ENCODE measurements at regions of chr15 and their contacts with region 1.

Region 1: DNA sequence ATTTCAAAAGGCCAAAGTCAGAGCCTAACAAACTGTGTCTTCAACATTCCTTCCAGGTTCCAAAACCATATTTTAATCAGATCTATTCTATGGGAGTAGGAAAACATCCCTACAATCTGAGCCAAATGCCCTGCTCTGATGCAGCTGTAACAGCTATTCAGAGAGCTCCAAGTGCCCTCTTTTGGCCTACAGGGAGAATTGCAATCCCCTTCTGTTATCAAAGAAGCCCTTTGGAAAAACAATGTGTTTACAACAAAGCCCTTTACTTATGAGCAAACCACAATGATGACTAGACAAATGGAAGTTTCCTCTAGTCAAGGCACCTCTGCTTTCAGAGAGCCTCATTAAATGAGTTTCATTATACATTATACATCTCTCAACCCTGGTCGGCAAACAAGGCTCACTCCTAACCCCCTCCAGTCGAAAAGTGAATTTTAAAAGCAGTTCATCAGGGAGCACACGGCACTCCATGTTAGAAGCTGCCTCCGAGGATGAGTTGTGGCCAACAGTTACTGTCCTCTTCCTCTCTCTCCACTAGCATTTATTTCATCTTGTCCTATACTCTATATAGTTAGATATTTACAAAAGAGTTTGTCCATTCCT is 42.6 kb upstream of the TMCO5A start:
- DNase-seq: peak; percentile 70
- ATAC-seq: peak; percentile 99
- H3K4me3 ChIP-seq: no peak overlapping the region
- H3K27ac ChIP-seq: no peak overlapping the region
- H3K4me1 ChIP-seq: peaks cover 2% of the 10 kb centered on the region; the same call in 1 of the 2 replicates
- H3K27me3 ChIP-seq: no peaks in the 10 kb centered on the region
- CTCF ChIP-seq: peak; percentile 88
- POLR2A ChIP-seq: no peak
- RAD21 ChIP-seq: peak; percentile 88

Region 2: GRCh38 chr15:36230741-36231140 is 1661.1 kb before region 1 on chr15:
- CTCF ChIA-PET with region 1: no interaction called
- POLR2A ChIA-PET with region 1: no interaction called
- dilution Hi-C with region 1: no loop called
- in situ Hi-C with region 1: loop called (anchors 25 kb)
- intact Hi-C with region 1: no loop called
- DNase-seq: peak; percentile 84
- ATAC-seq: peak; percentile 89
- H3K4me3 ChIP-seq: no peak overlapping the region
- H3K27ac ChIP-seq: no peak overlapping the region
- H3K4me1 ChIP-seq: peaks cover 3% of the 10 kb centered on the region
- H3K27me3 ChIP-seq: no peaks in the 10 kb centered on the region
- CTCF ChIP-seq: no peak
- POLR2A ChIP-seq: no peak
- RAD21 ChIP-seq: no peak

Region 3: GRCh38 chr15:37059086-37059485 is 832.8 kb before region 1 on chr15:
- CTCF ChIA-PET with region 1: no interaction called
- POLR2A ChIA-PET with region 1: no interaction called
- dilution Hi-C with region 1: no loop called
- in situ Hi-C with region 1: loop called (anchors 25 kb)
- intact Hi-C with region 1: no loop called
- DNase-seq: peak; percentile 93
- ATAC-seq: peak; percentile 91
- H3K4me3 ChIP-seq: no peak overlapping the region
- H3K27ac ChIP-seq: no peak overlapping the region
- H3K4me1 ChIP-seq: peaks cover 11% of the 10 kb centered on the region
- H3K27me3 ChIP-seq: no peaks in the 10 kb centered on the region
- CTCF ChIP-seq: no peak
- POLR2A ChIP-seq: no peak
- RAD21 ChIP-seq: no peak

Region 4: DNA sequence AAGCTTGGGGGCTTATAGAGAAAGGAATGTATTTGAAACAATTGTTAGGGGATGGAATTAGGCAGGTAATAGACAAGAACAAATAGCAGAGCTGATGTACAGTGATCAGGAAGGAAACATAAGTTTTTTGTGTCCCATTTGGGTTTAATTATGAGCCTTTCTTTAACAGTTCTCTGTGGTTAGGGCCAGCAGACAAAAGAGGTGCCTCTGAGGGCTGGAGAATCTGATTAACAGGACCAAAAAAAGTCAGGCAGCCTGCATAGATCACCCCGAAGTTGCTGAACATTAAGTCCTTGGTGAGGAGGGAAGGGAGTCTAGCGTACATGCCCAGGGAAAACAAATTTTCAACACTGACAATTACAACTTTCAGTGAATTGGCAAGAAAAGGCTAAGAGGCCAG is 272.2 kb after region 1 on chr15:
- CTCF ChIA-PET with region 1: no interaction called
- POLR2A ChIA-PET with region 1: no interaction called
- dilution Hi-C with region 1: no loop called
- in situ Hi-C with region 1: no loop called
- intact Hi-C with region 1: no loop called
- DNase-seq: no peak
- ATAC-seq: no peak
- H3K4me3 ChIP-seq: no peak overlapping the region
- H3K27ac ChIP-seq: no peak overlapping the region
- H3K4me1 ChIP-seq: peaks cover 2% of the 10 kb centered on the region; the same call in 1 of the 2 replicates
- H3K27me3 ChIP-seq: peaks cover 39% of the 10 kb centered on the region
- CTCF ChIP-seq: no peak
- POLR2A ChIP-seq: no peak
- RAD21 ChIP-seq: no peak

Measured in IMR-90 (cell line).